ENCODE measurements at regions of chr1 and their contacts with region 1.

Region 1: DNA sequence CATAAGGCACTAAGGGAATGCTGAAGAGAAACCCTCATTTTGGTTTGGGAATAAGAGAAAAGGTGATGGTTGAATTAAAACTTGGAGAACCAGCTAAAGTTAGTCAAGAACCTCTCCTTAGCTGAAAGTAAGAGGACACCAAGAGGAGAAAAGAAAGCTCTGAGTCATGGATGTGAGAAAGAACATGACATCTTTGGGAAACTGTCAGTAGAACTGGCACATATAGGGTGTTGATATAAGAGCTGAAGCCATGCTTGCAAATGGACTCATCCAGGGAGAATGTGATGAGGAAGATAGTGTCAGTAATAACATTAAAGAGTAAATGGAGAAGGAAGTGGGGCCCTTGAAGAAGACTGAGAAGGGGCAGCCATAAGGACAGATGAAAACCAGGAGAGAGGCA is 54.3 kb downstream of the LRRC8C start:
- DNase-seq: no peak
- ATAC-seq: no peak
- H3K4me3 ChIP-seq: no peak overlapping the region
- H3K4me3 Mint-ChIP-seq: no peak overlapping the region
- H3K27ac ChIP-seq: no peak overlapping the region
- H3K27ac Mint-ChIP-seq: peak overlapping the region; percentile 3
- H3K4me1 ChIP-seq: peaks cover 22% of the 10 kb centered on the region
- H3K4me1 Mint-ChIP-seq: peaks cover 68% of the 10 kb centered on the region
- H3K27me3 ChIP-seq: no peaks in the 10 kb centered on the region
- H3K27me3 Mint-ChIP-seq: no peaks in the 10 kb centered on the region
- CTCF ChIP-seq: no peak

Region 2: DNA sequence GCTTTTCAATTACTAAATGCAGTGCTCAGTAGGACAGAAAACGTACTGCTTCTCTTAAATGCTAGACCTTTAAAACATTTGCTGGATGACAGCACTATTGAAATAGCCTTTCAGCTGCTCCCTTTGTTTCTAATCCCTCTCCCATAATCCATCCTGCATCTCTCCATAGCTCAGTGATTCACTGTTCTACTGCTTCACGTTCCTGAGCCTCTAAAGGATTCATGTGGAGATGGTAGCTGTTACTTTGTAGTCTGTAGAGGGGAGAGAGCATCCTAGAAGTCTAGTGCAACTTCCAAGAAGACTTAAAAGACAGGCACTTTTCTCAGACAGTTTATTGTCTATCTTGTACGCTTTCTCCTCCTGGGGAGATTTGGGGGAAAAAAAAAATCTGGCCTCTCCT is 111.2 kb before region 1 on chr1:
- CTCF ChIA-PET with region 1: no interaction called
- POLR2A ChIA-PET with region 1: no interaction called
- intact Hi-C with region 1: no loop called
- DNase-seq: no peak
- ATAC-seq: no peak
- H3K4me3 ChIP-seq: no peak overlapping the region
- H3K4me3 Mint-ChIP-seq: no peak overlapping the region
- H3K27ac ChIP-seq: no peak overlapping the region
- H3K27ac Mint-ChIP-seq: no peak overlapping the region
- H3K4me1 ChIP-seq: no peaks in the 10 kb centered on the region
- H3K4me1 Mint-ChIP-seq: peaks cover 9% of the 10 kb centered on the region
- H3K27me3 ChIP-seq: no peaks in the 10 kb centered on the region
- H3K27me3 Mint-ChIP-seq: no peaks in the 10 kb centered on the region
- CTCF ChIP-seq: no peak

Region 3: GRCh38 chr1:89671775-89672488 is 15.3 kb before region 1 on chr1:
- CTCF ChIA-PET with region 1: interaction called, 3 read pairs
- POLR2A ChIA-PET with region 1: interaction called, 4 read pairs
- intact Hi-C with region 1: loop called in 1 of 2 experiments (anchors 2 kb)
- DNase-seq: no peak
- ATAC-seq: no peak
- H3K4me3 ChIP-seq: no peak overlapping the region
- H3K4me3 Mint-ChIP-seq: no peak overlapping the region
- H3K27ac ChIP-seq: no peak overlapping the region
- H3K27ac Mint-ChIP-seq: peak overlapping the region; percentile 23
- H3K4me1 ChIP-seq: peaks cover 83% of the 10 kb centered on the region
- H3K4me1 Mint-ChIP-seq: peaks cover 90% of the 10 kb centered on the region
- H3K27me3 ChIP-seq: no peaks in the 10 kb centered on the region
- H3K27me3 Mint-ChIP-seq: no peaks in the 10 kb centered on the region
- CTCF ChIP-seq: no peak

Region 4: DNA sequence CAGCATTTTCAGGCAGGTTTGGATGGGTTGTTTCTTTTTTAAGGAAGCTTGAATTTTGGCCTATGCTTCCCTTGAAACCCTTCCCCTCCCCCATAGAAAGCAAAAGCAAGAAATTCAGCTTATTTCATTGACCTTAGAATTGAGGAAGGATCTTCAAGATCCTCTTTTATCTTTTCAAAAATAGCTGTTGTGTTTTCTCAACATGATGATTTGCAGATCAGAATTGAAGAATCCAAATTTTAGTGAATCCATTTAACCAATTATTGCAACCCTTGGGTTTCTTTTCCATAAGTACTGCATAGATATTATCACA is 19.4 kb after region 1 on chr1:
- CTCF ChIA-PET with region 1: no interaction called
- POLR2A ChIA-PET with region 1: no interaction called
- intact Hi-C with region 1: no loop called
- DNase-seq: no peak
- ATAC-seq: no peak
- H3K4me3 ChIP-seq: no peak overlapping the region
- H3K4me3 Mint-ChIP-seq: no peak overlapping the region
- H3K27ac ChIP-seq: no peak overlapping the region
- H3K27ac Mint-ChIP-seq: no peak overlapping the region
- H3K4me1 ChIP-seq: peaks cover 6% of the 10 kb centered on the region
- H3K4me1 Mint-ChIP-seq: peaks cover 59% of the 10 kb centered on the region
- H3K27me3 ChIP-seq: no peaks in the 10 kb centered on the region
- H3K27me3 Mint-ChIP-seq: no peaks in the 10 kb centered on the region
- CTCF ChIP-seq: no peak

Region 5: DNA sequence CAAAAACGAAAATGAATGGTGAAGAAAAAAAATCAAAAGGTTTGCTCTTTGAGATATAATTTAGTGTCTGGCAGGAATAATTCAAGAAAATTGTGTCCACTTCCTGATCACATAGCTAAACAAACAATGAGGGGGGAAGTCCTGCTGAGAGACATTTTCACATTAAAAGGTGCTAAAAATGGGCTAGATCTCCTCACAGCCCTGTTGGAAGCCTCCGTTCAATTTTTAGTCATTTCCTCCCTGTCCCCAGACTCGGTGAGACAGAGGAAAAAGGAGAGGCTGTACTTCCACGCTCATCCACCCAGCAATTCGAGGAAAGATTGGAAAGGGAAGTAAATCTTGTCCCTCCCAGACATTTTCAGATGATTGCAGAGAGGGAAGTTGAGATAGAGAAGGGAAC is 926.1 kb after region 1 on chr1:
- CTCF ChIA-PET with region 1: no interaction called
- POLR2A ChIA-PET with region 1: no interaction called
- intact Hi-C with region 1: no loop called
- DNase-seq: no peak
- ATAC-seq: no peak
- H3K4me3 ChIP-seq: no peak overlapping the region
- H3K4me3 Mint-ChIP-seq: no peak overlapping the region
- H3K27ac ChIP-seq: no peak overlapping the region
- H3K27ac Mint-ChIP-seq: no peak overlapping the region
- H3K4me1 ChIP-seq: no peaks in the 10 kb centered on the region
- H3K4me1 Mint-ChIP-seq: no peaks in the 10 kb centered on the region
- H3K27me3 ChIP-seq: no peaks in the 10 kb centered on the region
- H3K27me3 Mint-ChIP-seq: peaks cover 8% of the 10 kb centered on the region
- CTCF ChIP-seq: no peak

Measured in CD8-positive, alpha-beta T cell (primary cell).